A549 (cell line): ENCODE measurements at regions of chr20 and their contacts with region 1.

Region 1: DNA sequence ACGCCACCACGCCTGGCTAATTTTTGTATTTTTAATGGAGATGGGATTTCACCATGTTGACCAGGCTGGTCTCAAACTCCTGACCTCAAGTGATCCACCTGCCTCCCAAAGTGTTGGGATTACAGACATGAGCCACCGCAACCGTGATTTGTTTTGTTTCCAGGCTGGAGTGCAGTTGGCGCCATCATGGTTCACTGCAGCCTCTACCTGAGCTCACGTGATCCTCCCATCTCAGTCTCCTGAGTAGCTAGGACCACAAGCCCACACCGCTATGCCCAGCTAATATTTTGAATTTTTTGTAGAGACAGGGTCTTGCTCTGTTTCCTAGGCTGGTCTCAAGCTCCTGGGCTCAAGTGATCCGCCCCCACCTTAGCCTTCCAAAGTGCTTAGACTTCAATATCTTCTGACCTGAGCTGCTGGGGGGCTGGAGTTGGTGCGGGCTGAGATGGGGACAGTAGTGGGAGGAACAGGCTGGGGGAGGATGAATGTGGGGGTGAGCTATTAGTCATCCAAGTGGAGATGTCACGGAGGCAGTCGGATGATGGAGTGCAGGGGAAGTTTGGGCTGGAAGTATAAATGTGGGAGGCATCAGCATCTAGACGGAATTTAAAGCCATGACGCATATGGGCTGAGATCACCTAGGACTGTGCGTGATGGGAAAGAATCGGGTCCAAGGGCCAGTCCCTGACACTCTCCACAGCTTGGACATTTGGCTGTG is 23.1 kb upstream of the ZMYND8 start:
- DNase-seq: peak; percentile 56 to 92
- ATAC-seq: peak; percentile 72 to 74
- H3K4me3 ChIP-seq: no peak overlapping the region
- H3K27ac ChIP-seq: peak overlapping the region; percentile 90 to 92
- H3K4me1 ChIP-seq: peaks cover 60% of the 10 kb centered on the region
- CTCF ChIP-seq: no peak
- EP300 ChIP-seq: peak; percentile 89 to 93
- POLR2A ChIP-seq: no peak
- RAD21 ChIP-seq: peak in 1 of 2 experiments; percentile 7; a peak in 3 of 5 replicates

Region 2: GRCh38 chr20:46400828-46401477 is 978.6 kb before region 1 on chr20:
- CTCF ChIA-PET with region 1: no interaction called
- POLR2A ChIA-PET with region 1: no interaction called
- DNase-seq: no peak
- ATAC-seq: no peak
- H3K4me3 ChIP-seq: no peak overlapping the region
- H3K27ac ChIP-seq: no peak overlapping the region
- H3K4me1 ChIP-seq: peaks cover 7% of the 10 kb centered on the region
- CTCF ChIP-seq: no peak
- EP300 ChIP-seq: no peak
- POLR2A ChIP-seq: no peak
- RAD21 ChIP-seq: no peak

Region 3: GRCh38 chr20:46865824-46866223 is 513.8 kb before region 1 on chr20:
- CTCF ChIA-PET with region 1: no interaction called
- POLR2A ChIA-PET with region 1: no interaction called
- DNase-seq: no peak
- ATAC-seq: no peak
- H3K4me3 ChIP-seq: no peak overlapping the region
- H3K27ac ChIP-seq: no peak overlapping the region
- H3K4me1 ChIP-seq: no peaks in the 10 kb centered on the region
- CTCF ChIP-seq: no peak
- EP300 ChIP-seq: no peak
- POLR2A ChIP-seq: no peak
- RAD21 ChIP-seq: no peak

Region 4: DNA sequence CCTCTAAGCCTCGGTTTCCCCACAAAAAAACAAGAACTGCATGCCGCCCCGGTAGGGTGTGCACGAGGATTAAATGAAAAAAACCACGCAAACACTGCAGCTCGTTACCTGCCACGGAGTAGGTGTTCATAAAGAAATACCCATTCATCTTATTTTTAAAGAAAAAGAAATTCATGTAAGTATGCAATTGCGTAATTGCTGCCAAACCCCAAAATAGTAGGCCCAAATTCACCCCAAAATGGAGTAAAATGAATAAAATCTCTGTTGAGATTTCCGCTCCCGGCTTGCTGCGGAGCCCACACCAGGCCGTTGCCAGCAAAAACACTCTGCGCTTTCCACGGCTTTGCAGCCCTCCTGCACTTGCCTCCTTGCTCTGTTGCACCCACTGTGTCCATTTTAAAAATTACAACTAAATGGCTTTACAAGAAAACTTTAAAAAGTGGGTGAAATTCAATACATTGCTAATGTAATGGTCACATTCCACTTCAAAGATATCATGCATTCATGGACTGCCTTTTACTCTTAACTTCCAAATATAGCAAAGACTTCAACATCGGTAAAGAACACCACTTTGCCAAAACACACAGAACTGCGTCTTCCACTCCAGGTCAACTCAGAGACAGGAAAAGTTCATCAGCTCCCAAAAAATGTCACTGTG is 148.1 kb before region 1 on chr20:
- CTCF ChIA-PET with region 1: interaction called, 11 read pairs
- POLR2A ChIA-PET with region 1: no interaction called
- DNase-seq: no peak
- ATAC-seq: no peak
- H3K4me3 ChIP-seq: no peak overlapping the region
- H3K27ac ChIP-seq: no peak overlapping the region
- H3K4me1 ChIP-seq: peaks cover 5% of the 10 kb centered on the region; the same call in 1 of the 3 replicates
- CTCF ChIP-seq: no peak
- EP300 ChIP-seq: no peak
- POLR2A ChIP-seq: no peak
- RAD21 ChIP-seq: no peak

Region 5: DNA sequence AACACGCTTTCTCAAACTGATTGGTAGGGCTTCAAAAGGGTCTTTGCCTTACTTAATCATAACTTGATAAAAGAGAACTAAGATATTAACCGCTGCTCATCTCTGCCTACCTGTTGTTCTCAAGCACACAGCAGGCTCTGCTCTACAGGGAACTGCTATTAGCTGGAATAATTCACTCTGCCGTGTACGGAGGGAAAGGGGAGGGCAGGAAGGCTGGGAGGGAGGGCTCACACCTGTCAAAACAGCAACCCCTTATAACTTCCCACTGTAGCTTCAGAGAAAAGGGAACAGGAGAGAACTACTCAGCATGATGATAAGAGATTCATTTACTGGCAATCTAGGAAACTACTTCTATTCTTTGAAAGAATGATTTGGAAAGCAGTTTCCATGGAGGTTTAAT is 98.2 kb before region 1 on chr20:
- CTCF ChIA-PET with region 1: interaction called, 684 read pairs
- POLR2A ChIA-PET with region 1: no interaction called
- DNase-seq: no peak
- ATAC-seq: no peak
- H3K4me3 ChIP-seq: no peak overlapping the region
- H3K27ac ChIP-seq: peak overlapping the region in 1 of 2 experiments; percentile 93; a peak in 3 of 6 replicates
- H3K4me1 ChIP-seq: peaks cover 31% of the 10 kb centered on the region
- CTCF ChIP-seq: no peak
- EP300 ChIP-seq: no peak
- POLR2A ChIP-seq: no peak
- RAD21 ChIP-seq: no peak

Region 6: DNA sequence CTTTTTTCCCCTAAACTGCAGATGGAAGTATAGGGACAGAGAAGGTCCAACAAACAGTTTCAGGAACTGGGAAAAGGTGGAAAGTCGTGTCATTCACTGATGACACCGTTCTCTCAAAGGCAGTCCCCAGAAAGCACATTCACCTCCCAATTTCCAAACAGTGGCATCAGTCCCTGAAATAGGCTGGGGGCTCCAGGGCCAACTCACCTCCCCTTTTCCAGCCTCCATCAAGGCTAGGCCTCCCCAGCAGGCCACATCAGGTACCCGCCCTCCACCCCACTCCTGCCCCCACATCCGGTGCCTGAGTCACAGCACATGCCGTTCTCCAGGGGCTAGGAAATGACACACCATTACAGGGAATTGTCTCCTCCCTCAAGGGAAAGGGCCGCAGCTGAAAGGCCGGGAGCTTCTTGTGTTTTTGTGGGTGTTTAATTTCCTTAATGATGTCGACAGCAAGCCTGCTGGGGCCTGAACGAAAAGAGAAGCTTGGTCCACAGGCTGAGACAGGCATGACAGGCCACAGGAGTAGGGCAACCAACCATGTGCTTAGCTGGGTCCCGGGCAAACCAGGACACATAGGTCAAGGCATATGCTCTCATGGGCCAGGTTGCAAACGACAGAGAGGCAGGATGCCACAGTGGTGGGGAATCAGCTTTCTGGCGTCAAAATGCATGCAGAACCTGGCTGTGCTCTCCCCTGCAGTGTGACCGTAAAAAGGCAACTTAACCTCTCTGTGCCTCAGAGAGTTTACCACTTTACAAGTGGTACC is 62.3 kb before region 1 on chr20:
- CTCF ChIA-PET with region 1: interaction called, 131 read pairs
- POLR2A ChIA-PET with region 1: interaction called, 3 read pairs
- DNase-seq: peak; percentile 71 to 82
- ATAC-seq: peak in 1 of 2 experiments; percentile 20; a peak in 2 of 6 replicates
- H3K4me3 ChIP-seq: no peak overlapping the region
- H3K27ac ChIP-seq: peak overlapping the region; percentile 94 to 97
- H3K4me1 ChIP-seq: peaks cover 89% of the 10 kb centered on the region
- CTCF ChIP-seq: no peak
- EP300 ChIP-seq: no peak
- POLR2A ChIP-seq: no peak
- RAD21 ChIP-seq: no peak

Region 7: GRCh38 chr20:47392015-47392720 is 12.6 kb after region 1 on chr20:
- CTCF ChIA-PET with region 1: interaction called, 21 read pairs
- POLR2A ChIA-PET with region 1: no interaction called
- DNase-seq: peak; percentile 83 to 99
- ATAC-seq: peak; percentile 81 to 85
- H3K4me3 ChIP-seq: no peak overlapping the region
- H3K27ac ChIP-seq: peak overlapping the region; percentile 90 to 92
- H3K4me1 ChIP-seq: peaks cover 40% of the 10 kb centered on the region
- CTCF ChIP-seq: no peak
- EP300 ChIP-seq: no peak
- POLR2A ChIP-seq: no peak
- RAD21 ChIP-seq: peak in 1 of 2 experiments; percentile 28; a peak in 2 of 5 replicates

Region 8: GRCh38 chr20:47501483-47502270 is 122.1 kb after region 1 on chr20 and contains the start of gene NCOA3:
- CTCF ChIA-PET with region 1: interaction called, 13 read pairs
- POLR2A ChIA-PET with region 1: interaction called, 23 read pairs
- DNase-seq: peak; percentile 95 to 96
- ATAC-seq: peak; percentile 94 to 98
- H3K4me3 ChIP-seq: peak within 1 kb of the TSS; percentile 67
- H3K27ac ChIP-seq: peak within 1 kb of the TSS; percentile 91 to 98
- H3K4me1 ChIP-seq: peaks cover 33% of the 10 kb centered on the region
- CTCF ChIP-seq: no peak; the same call in 2 of the 3 replicates
- EP300 ChIP-seq: no peak; a peak in 1 of 5 replicates
- POLR2A ChIP-seq: peak; percentile 91
- RAD21 ChIP-seq: peak; percentile 28 to 60; a peak in 4 of 5 replicates
- polyA plus RNA-seq, gene NCOA3: 135 and 136 TPM in 2 replicates

Region 9: DNA sequence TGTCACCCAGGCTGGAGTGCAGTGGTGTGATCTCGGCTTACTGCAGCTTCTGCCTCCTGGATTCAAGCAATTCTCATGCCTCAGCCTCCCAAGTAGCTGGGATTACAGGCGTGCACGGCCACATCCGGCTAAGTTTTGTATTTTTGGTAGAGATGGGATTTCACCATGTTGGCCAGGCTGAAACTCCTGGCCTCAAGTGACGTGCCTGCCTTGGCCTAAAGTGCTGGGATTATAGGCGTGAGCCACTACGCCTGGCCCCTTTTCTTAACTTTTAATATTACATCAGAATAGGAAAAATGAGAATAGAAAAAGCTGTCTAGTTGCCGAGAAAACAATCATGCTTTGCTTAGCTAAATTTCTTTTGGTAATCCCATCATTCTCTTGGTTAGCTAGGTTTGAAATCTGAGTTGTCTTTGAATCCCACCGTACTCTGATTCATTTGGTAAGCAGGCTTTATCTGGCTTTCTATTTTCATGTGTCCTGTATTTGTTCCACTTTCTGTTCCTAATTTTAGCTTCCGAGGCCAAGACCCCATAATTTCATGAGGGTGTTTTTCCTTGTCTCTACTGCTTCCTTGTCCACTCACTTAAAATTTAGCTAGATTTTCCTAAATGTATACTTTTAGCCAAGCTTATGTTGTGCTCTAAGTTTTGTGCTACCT is 205.6 kb after region 1 on chr20:
- CTCF ChIA-PET with region 1: no interaction called
- POLR2A ChIA-PET with region 1: no interaction called
- DNase-seq: no peak
- ATAC-seq: no peak
- H3K4me3 ChIP-seq: no peak overlapping the region
- H3K27ac ChIP-seq: peak overlapping the region in 1 of 2 experiments; percentile 12; a peak in 1 of 6 replicates
- H3K4me1 ChIP-seq: peaks cover 52% of the 10 kb centered on the region
- CTCF ChIP-seq: no peak
- EP300 ChIP-seq: no peak
- POLR2A ChIP-seq: no peak
- RAD21 ChIP-seq: no peak